Activated CD8-positive, alpha-beta T cell treated with anti-CD3 and anti-CD28 coated beads, Interleukin-2, amount 10 ng/mL, durations not matched to agents 7 days and 5 days (primary cell): ENCODE measurements at regions of chr2 and their contacts with region 1.

Region 1: GRCh38 chr2:27303093-27304025 is 4.9 kb downstream of the UCN start:
- DNase-seq: peak; percentile 66
- ATAC-seq: peak; percentile 57
- H3K4me3 Mint-ChIP-seq: peak overlapping the region; percentile 56
- H3K27ac Mint-ChIP-seq: peak overlapping the region; percentile 58
- H3K4me1 Mint-ChIP-seq: peaks cover 13% of the 10 kb centered on the region
- H3K27me3 Mint-ChIP-seq: peaks cover 4% of the 10 kb centered on the region

Region 2: GRCh38 chr2:26959331-26959730 is 344.0 kb before region 1 on chr2:
- CTCF ChIA-PET with region 1: interaction called, 11 read pairs
- POLR2A ChIA-PET with region 1: no interaction called
- DNase-seq: no peak
- ATAC-seq: no peak
- H3K4me3 Mint-ChIP-seq: no peak overlapping the region
- H3K27ac Mint-ChIP-seq: no peak overlapping the region
- H3K4me1 Mint-ChIP-seq: no peaks in the 10 kb centered on the region
- H3K27me3 Mint-ChIP-seq: peaks cover 22% of the 10 kb centered on the region

Region 3: DNA sequence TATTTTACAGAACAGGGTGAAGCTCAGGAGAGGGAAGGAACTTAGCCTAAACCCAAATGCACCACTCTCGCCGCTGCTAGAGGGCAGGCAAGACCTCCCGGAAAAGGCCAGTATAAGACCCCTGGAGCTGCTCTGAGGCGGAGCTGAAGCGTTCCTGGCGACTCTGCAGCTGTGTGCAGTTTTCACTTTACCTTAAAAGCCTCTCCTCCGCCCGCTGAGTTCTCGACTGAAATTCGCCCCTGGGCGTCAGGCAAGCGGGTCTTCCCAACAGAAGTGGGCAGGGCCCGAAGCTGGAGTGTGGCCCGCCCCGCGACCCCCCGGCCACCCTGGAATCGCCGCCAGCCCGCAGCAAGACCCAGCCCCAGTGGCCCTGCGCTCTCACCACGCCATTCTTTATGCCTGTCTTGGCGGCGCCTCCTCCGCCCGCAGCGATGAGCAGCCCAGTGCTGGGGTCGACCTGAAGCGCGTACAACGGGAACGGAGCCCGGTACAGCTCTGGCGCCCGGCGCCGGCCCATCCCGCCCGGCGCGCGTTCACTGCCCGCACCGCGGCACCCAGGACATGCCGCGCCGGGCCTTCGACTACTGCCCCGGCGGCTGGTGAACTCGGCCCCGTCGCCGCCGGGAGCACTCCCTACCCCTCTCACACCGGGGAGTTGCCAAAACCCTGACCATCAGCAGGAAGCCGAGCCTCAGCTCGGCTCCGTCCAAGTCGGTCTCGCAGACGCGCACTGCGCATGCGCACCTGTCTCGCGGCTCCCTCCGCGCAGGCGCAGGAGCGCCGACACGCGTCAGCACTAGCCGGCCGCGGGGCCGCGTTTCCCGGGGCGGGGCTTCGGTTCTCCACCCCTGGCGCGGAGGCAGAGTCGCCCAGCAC is 169.2 kb before region 1 on chr2 and contains the start of gene PREB:
- CTCF ChIA-PET with region 1: interaction called, 11 read pairs
- POLR2A ChIA-PET with region 1: interaction called, 5 read pairs
- DNase-seq: peak; percentile 98
- ATAC-seq: peak; percentile 96
- H3K4me3 Mint-ChIP-seq: peak within 1 kb of the TSS; percentile 94
- H3K27ac Mint-ChIP-seq: peak within 1 kb of the TSS; percentile 97
- H3K4me1 Mint-ChIP-seq: peaks cover 29% of the 10 kb centered on the region
- H3K27me3 Mint-ChIP-seq: no peaks in the 10 kb centered on the region
- total RNA-seq, gene PREB: 66.5 to 72.1 TPM

Region 4: DNA sequence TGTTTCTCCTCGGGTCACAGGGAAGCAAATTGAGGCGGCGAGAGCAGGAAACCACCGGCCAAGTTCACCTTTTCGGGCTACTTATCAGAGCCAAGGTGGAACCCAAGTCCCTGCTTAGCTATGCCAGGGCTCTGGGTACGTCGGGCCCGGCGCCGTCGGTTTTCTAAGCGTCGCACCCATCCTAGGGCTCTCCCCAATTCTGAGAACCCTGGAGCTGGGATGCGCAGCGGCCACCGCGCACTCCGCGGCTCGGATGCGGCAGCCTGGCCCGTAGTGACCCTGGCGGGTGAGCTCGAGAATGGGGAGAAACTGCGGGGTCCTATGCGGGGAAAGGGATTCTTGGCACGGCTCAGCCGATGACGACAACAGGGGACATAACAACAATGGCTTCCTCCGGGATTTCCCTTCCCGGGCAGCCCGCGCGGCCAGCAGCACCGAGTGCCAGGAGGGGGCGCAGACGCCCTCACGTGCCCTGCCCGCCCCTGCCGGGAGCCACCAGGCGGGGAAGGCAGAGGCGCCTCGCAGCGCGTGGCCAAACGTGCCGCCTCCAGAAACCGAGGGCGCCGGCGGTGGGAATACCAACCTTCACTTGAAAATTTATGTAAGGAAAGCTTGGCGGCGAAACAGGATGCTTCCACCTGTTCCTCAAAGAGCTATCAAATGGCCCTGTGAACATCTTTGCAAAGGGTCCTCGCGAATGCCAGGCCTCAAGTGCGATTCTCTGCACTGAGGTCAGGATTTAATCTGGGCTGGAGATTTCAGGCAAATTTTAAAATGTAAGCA is 38.4 kb before region 1 on chr2:
- CTCF ChIA-PET with region 1: interaction called, 45 read pairs
- POLR2A ChIA-PET with region 1: no interaction called
- DNase-seq: peak; percentile 43
- ATAC-seq: peak; percentile 50
- H3K4me3 Mint-ChIP-seq: peak overlapping the region; percentile 48
- H3K27ac Mint-ChIP-seq: no peak overlapping the region
- H3K4me1 Mint-ChIP-seq: peaks cover 26% of the 10 kb centered on the region
- H3K27me3 Mint-ChIP-seq: peaks cover 43% of the 10 kb centered on the region

Region 5: GRCh38 chr2:27322766-27323595 is 19.6 kb after region 1 on chr2 and contains the start of gene MPV17:
- CTCF ChIA-PET with region 1: interaction called, 36 read pairs
- POLR2A ChIA-PET with region 1: interaction called, 6 read pairs
- DNase-seq: peak; percentile 92
- ATAC-seq: peak; percentile 96
- H3K4me3 Mint-ChIP-seq: peak within 1 kb of the TSS; percentile 98
- H3K27ac Mint-ChIP-seq: peak within 1 kb of the TSS; percentile 98
- H3K4me1 Mint-ChIP-seq: peaks cover 22% of the 10 kb centered on the region
- H3K27me3 Mint-ChIP-seq: no peaks in the 10 kb centered on the region
- total RNA-seq, gene MPV17: 78.0 to 80.5 TPM